BJ (cell line): ENCODE measurements at regions of chr5 and their contacts with region 1.

Region 1: GRCh38 chr5:75236322-75237316 is at the start of gene ANKRD31:
- DNase-seq: peak; percentile 19
- H3K4me3 ChIP-seq: peak within 1 kb of the TSS; percentile 67
- H3K27me3 ChIP-seq: no peaks in the 10 kb centered on the region
- CTCF ChIP-seq: no peak; the same call in 1 of the 2 replicates
- polyA plus RNA-seq, gene ANKRD31: 0.02 and 0.07 TPM in 2 replicates

Region 2: GRCh38 chr5:75225506-75225905 is 11.1 kb before region 1 on chr5:
- CTCF ChIA-PET with region 1: interaction called, 11 read pairs
- POLR2A ChIA-PET with region 1: no interaction called
- DNase-seq: no peak
- H3K4me3 ChIP-seq: no peak overlapping the region
- H3K27me3 ChIP-seq: no peaks in the 10 kb centered on the region
- CTCF ChIP-seq: no peak

Region 3: DNA sequence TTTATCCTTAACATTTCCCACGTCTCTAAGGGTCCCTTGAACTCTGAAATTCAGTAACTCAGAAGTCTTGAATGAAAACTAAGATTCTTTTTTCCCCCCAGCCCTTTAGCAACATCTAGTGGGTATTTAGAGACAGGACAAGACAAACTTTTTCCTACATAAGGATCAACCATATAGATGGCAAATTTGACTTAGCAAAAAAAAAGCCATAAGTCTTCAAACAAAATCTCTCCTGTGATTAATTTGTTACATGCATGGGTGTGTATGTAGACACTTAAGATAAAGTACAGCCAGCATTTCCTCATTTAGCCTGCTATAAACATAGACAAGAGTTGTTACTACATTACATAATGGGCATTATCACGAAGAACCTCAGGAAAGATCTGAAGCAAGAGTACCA is 29.1 kb after region 1 on chr5:
- CTCF ChIA-PET with region 1: interaction called, 12 read pairs
- POLR2A ChIA-PET with region 1: no interaction called
- DNase-seq: no peak
- H3K4me3 ChIP-seq: no peak overlapping the region
- H3K27me3 ChIP-seq: no peaks in the 10 kb centered on the region; the same call in 1 of the 2 replicates
- CTCF ChIP-seq: peak; percentile 65

Region 4: GRCh38 chr5:75389430-75389829 is 152.8 kb after region 1 on chr5:
- CTCF ChIA-PET with region 1: no interaction called
- POLR2A ChIA-PET with region 1: no interaction called
- DNase-seq: no peak
- H3K4me3 ChIP-seq: no peak overlapping the region
- H3K27me3 ChIP-seq: no peaks in the 10 kb centered on the region
- CTCF ChIP-seq: no peak